Colonic mucosa (tissue), 4 donors: ENCODE measurements at regions of chr17 and their contacts with region 1.

Region 1: DNA sequence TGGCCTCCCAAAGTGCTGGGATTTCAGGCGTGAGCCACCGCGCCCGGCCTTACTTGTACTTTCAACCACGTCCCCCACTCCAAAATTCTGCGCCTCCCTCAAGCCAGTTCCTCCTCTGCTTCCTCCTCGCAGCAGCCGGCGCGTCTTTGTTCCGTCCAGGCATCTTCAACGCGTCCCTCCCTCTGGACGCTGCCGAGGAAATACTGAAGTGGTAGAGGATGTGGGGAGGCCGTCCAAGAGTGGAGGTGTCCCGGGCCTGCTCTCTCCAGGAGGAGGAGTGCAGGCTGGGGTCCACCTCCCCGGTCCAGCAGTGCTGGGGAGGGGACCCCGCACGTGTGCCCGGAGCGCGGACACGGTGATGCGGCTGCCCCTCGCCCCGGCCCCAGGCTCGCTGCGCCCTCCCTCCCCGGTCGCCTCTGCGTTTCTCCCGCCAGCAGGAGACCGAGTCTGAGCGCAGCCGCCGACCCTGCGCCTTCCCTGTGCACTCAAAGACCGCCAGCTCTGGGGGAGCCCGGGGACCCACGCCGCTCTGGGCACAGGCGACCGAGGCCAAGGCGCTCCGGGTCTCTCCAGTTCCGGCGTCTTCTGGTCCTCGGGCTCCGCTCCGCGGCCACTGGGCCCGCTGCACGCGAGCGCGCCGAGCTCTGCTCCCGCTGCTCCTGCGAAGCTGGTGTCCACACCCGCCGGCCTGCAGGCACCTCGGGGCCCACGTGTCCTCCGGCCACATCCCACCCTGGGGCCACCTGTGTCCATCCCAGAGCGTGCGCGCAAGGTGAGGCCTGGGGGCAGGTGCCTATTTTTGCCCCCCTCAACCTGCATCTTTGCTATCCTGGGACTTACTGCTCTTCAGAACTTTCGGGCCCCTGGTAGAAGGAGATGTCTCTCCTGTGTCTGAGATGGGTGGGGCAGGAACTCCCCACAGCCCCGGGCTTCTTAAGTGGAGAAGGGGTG is 31.7 kb downstream of the OSBPL7 start:
- DNase-seq: peak; percentile 32
- H3K4me3 ChIP-seq: peak overlapping the region; percentile 23
- H3K27ac ChIP-seq: no peak overlapping the region
- H3K4me1 ChIP-seq: no peaks in the 10 kb centered on the region
- H3K27me3 ChIP-seq: peaks cover 29% of the 10 kb centered on the region
- CTCF ChIP-seq: no peak

Region 2: DNA sequence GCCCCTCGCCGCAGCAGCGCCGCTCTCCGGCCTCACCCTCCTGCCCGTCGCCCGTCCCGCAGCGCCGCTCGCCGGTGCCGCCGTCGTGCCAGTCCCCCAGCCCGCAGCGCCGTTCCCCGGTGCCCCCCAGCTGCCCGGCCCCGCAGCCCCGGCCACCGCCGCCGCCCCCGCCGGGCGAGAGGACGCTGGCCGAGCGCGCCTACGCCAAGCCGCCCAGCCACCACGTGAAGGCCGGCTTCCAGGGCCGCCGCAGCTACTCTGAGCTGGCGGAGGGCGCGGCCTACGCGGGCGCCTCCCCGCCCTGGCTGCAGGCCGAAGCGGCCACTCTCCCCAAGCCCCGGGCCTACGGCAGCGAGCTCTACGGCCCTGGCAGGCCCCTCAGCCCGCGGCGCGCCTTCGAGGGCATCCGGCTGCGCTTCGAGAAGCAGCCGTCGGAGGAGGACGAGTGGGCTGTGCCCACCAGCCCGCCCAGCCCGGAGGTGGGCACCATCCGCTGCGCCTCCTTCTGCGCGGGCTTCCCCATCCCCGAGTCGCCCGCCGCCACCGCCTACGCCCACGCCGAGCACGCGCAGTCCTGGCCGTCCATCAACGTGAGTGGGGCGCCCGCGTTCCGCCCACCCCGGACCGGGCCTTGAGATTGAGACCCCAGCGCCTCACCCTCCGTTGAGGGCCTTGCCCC is 80.9 kb before region 1 on chr17:
- intact Hi-C with region 1: loop called (anchors 5 kb)
- DNase-seq: no peak
- H3K4me3 ChIP-seq: no peak overlapping the region
- H3K27ac ChIP-seq: no peak overlapping the region
- H3K4me1 ChIP-seq: no peaks in the 10 kb centered on the region
- H3K27me3 ChIP-seq: no peaks in the 10 kb centered on the region
- CTCF ChIP-seq: no peak